Activated T-helper 2 cell treated with anti-CD3 and anti-CD28 coated beads, Interferon-gamma antibody, Interleukin-2, Interleukin-4, amounts not matched to agents 10 μg/mL and 5 μg/mL and 100 μg/mL, durations not matched to agents 14 hours and 24 hours and 36 hours (primary cell): ENCODE measurements at regions of chr4 and their contacts with region 1.

Region 1: DNA sequence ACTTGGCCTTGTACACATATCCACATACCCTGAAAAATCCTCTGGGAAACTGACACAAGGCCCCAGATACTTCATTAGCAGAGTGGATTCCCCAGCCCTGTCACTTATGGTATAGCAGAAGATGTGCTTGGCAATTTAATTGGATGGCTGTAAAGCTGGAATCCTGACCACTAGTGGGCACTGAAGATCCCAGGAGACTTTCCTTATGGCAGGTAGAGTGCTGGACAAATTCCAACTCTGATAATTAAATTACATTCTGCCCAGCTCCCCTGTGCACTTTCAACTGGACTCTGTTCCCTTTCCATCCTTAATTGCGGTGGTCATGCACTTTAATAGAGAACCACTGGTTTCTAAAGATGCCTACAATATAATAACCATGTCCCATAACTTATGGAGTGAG is 119.8 kb downstream of the DCK start:
- DNase-seq: no peak
- H3K4me3 Mint-ChIP-seq: no peak overlapping the region
- H3K27ac Mint-ChIP-seq: no peak overlapping the region
- H3K4me1 Mint-ChIP-seq: no peaks in the 10 kb centered on the region
- H3K27me3 Mint-ChIP-seq: no peaks in the 10 kb centered on the region

Region 2: GRCh38 chr4:71130827-71131603 is 17.7 kb after region 1 on chr4:
- intact Hi-C with region 1: loop called (anchors 1 kb)
- DNase-seq: no peak
- H3K4me3 Mint-ChIP-seq: no peak overlapping the region
- H3K27ac Mint-ChIP-seq: peak overlapping the region; percentile 8
- H3K4me1 Mint-ChIP-seq: no peaks in the 10 kb centered on the region
- H3K27me3 Mint-ChIP-seq: no peaks in the 10 kb centered on the region